Posterior cingulate gyrus (tissue), 11 donors: ENCODE measurements at regions of chr1 and their contacts with region 1.

Region 1: DNA sequence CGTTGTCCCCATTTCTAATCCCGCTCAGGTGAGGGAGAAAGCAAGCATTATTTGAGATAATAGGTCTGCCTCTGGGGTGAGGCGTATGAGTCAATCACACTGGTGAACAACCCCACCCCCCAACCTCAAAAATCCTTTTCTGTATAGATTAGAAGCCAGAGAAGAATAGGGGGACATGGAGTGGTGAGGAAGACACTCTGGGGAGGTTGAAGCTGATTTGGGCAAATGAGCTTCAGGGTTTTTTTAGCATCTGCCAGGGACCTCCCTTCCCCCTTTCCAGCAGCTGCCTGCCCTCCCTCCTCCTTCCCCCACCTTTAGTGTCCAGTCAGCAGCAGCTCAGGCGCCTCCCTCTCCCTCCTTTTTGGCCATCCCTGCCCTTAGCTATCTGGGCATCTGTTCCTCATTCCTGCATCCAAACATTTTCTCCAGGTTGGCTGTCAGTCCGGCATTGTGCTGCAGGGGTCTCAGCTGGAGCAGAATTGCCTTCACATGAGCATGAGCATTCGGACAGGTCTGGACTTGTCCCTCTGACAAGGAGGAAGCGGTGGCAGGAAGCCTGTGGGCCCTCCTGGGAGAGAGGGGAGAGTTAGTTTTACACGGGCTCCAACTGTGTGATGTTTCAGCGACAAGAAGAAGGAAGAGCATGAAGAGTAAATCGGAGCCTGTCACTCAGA is 30.8 kb upstream of the PTGFRN start:
- DNase-seq: peak in 2 of 10 donors; percentile 11 to 73

Region 2: GRCh38 chr1:116268204-116268603 is 610.7 kb before region 1 on chr1:
- intact Hi-C with region 1: no loop called
- DNase-seq: peak; percentile 26 to 91 (median 54)

Region 3: DNA sequence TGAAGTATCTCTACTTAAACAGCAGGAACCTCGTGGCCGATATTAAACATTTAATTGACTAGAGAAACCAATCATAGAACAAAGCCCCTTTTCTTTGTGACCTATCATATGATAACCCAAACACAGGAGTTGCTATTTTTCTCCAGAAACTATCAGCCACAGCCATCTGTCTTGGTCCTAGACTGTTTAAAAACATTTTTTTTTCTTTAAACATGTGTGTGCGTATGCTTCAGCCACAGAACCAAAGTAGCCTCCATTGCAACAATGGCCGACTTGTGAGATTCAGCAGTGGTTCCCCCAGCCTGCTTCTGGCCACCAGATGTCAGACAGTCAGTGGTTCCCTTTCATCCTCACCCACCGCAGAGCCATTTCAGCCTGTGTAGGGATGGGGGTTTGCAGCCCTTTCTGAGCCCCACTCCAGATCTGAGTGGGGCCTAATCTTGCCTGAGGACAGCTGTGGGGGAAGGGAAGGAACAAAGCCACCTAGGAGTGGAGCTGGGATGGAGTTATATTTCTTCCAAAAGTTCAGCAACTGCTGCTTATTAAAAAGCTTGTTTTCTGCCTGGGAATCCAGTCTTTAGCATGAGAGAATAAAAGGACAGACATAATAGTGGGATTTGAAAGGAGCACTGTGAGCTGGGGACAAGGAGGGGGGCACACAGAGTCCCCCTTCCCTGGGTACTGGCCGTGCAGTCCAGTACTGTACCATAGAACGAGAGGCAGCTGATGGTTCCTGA is 199.7 kb before region 1 on chr1:
- intact Hi-C with region 1: no loop called
- DNase-seq: peak in 1 of 10 donors; percentile 52

Region 4: GRCh38 chr1:116919802-116920201 is 40.9 kb after region 1 on chr1:
- intact Hi-C with region 1: loop called (anchors 5 kb)
- DNase-seq: no peak

Region 5: GRCh38 chr1:116954440-116954839 is 75.5 kb after region 1 on chr1:
- intact Hi-C with region 1: no loop called
- DNase-seq: no peak